Dorsolateral prefrontal cortex (tissue), 120 donors: ENCODE measurements at regions of chr17 and their contacts with region 1.

Region 1: GRCh38 chr17:74212913-74213791 is at the start of gene TTYH2:
- DNase-seq: peak; percentile 78 to 92 (median 89)
- H3K4me3 ChIP-seq: peak within 1 kb of the TSS; percentile 46 to 85 (median 73)
- H3K27ac ChIP-seq: peak within 1 kb of the TSS; percentile 51 to 98 (median 93)
- H3K27me3 ChIP-seq: no peaks in the 10 kb centered on the region
- CTCF ChIP-seq: peak in 46 of 56 donors; percentile 9 to 69 (median 42)
- total RNA-seq, gene TTYH2: 29.4 to 409 (median 112) TPM

Region 2: GRCh38 chr17:74235040-74235581 is 22.0 kb after region 1 on chr17:
- intact Hi-C with region 1: loop called (anchors 2 kb)
- DNase-seq: peak in 6 of 10 donors; percentile 47 to 74 (median 69)
- H3K4me3 ChIP-seq: peak overlapping the region in 40 of 59 donors; percentile 0 to 53 (median 23)
- H3K27ac ChIP-seq: peak overlapping the region; percentile 88 to 100 (median 97)
- H3K27me3 ChIP-seq: no peaks in the 10 kb centered on the region
- CTCF ChIP-seq: peak in 10 of 56 donors; percentile 9 to 35 (median 16)

Region 3: GRCh38 chr17:74245145-74245831 is 32.1 kb after region 1 on chr17:
- intact Hi-C with region 1: loop called (anchors 1 to 2 kb)
- DNase-seq: peak; percentile 40 to 97 (median 93)
- H3K4me3 ChIP-seq: peak overlapping the region in 8 of 59 donors; percentile 3 to 40 (median 12)
- H3K27ac ChIP-seq: peak overlapping the region; percentile 76 to 100 (median 98)
- H3K27me3 ChIP-seq: no peaks in the 10 kb centered on the region
- CTCF ChIP-seq: peak in 8 of 56 donors; percentile 7 to 40 (median 22)

Region 4: GRCh38 chr17:74271901-74272561 is 58.9 kb after region 1 on chr17:
- intact Hi-C with region 1: loop called in 1 of 2 experiments (anchors 1 kb)
- DNase-seq: peak; percentile 28 to 96 (median 90)
- H3K4me3 ChIP-seq: peak overlapping the region in 12 of 59 donors; percentile 1 to 29 (median 14)
- H3K27ac ChIP-seq: peak overlapping the region in 56 of 59 donors; percentile 18 to 90 (median 82)
- H3K27me3 ChIP-seq: peaks cover 0 to 6% (median 0%) of the 10 kb centered on the region in 45 donors
- CTCF ChIP-seq: peak in 24 of 56 donors; percentile 11 to 51 (median 24)

Region 5: GRCh38 chr17:74296548-74296936 is 83.4 kb after region 1 on chr17:
- intact Hi-C with region 1: loop called (anchors 1 to 2 kb)
- DNase-seq: peak; percentile 66 to 87 (median 78)
- H3K4me3 ChIP-seq: peak overlapping the region in 1 of 59 donors; percentile 3
- H3K27ac ChIP-seq: peak overlapping the region in 46 of 59 donors; percentile 3 to 79 (median 62)
- H3K27me3 ChIP-seq: peaks cover 0 to 4% (median 0%) of the 10 kb centered on the region in 45 donors
- CTCF ChIP-seq: peak; percentile 32 to 88 (median 74)

Region 6: GRCh38 chr17:74361230-74362068 is 148.3 kb after region 1 on chr17 and contains the start of gene BTBD17:
- intact Hi-C with region 1: loop called (anchors 2 kb)
- DNase-seq: peak; percentile 28 to 82 (median 70)
- H3K4me3 ChIP-seq: peak within 1 kb of the TSS in 25 of 59 donors; percentile 2 to 46 (median 14)
- H3K27ac ChIP-seq: peak within 1 kb of the TSS in 49 of 59 donors; percentile 8 to 85 (median 59)
- H3K27me3 ChIP-seq: peaks cover 0 to 27% (median 7%) of the 10 kb centered on the region in 45 donors
- CTCF ChIP-seq: peak in 55 of 56 donors; percentile 58 to 95 (median 77)
- total RNA-seq, gene BTBD17: 0.28 to 6.4 (median 1.6) TPM

Region 7: GRCh38 chr17:74457146-74457819 is 244.1 kb after region 1 on chr17:
- intact Hi-C with region 1: loop called (anchors 2 to 10 kb)
- DNase-seq: peak; percentile 75 to 90 (median 84)
- H3K4me3 ChIP-seq: peak overlapping the region in 13 of 59 donors; percentile 3 to 32 (median 19)
- H3K27ac ChIP-seq: peak overlapping the region in 18 of 59 donors; percentile 5 to 63 (median 40)
- H3K27me3 ChIP-seq: no peaks in the 10 kb centered on the region
- CTCF ChIP-seq: peak; percentile 90 to 99 (median 96)

Region 8: GRCh38 chr17:74545843-74546230 is 332.7 kb after region 1 on chr17 and contains the start of gene CD300C:
- intact Hi-C with region 1: no loop called
- DNase-seq: peak in 2 of 10 donors; percentile 35 to 40
- H3K4me3 ChIP-seq: peak within 1 kb of the TSS in 19 of 59 donors; percentile 5 to 35 (median 24)
- H3K27ac ChIP-seq: peak within 1 kb of the TSS in 2 of 59 donors; percentile 3 to 15
- H3K27me3 ChIP-seq: peaks cover 0 to 5% (median 0%) of the 10 kb centered on the region in 45 donors
- CTCF ChIP-seq: no peak
- total RNA-seq, gene CD300C: 0.31 to 3.6 (median 0.98) TPM in 109 of 120 experiments, not detected in the others